Prostate gland (tissue), 2 donors: ENCODE measurements at regions of chr12 and their contacts with region 1.

Region 1: GRCh38 chr12:45183246-45183645 is 32.6 kb upstream of the ANO6 start:
- DNase-seq: no peak
- H3K4me3 ChIP-seq: no peak overlapping the region
- H3K27ac ChIP-seq: no peak overlapping the region
- H3K4me1 ChIP-seq: no peaks in the 10 kb centered on the region
- H3K27me3 ChIP-seq: no peaks in the 10 kb centered on the region
- CTCF ChIP-seq: peak in 2 of 4 experiments; percentile 22 to 23
- POLR2A ChIP-seq: no peak

Region 2: DNA sequence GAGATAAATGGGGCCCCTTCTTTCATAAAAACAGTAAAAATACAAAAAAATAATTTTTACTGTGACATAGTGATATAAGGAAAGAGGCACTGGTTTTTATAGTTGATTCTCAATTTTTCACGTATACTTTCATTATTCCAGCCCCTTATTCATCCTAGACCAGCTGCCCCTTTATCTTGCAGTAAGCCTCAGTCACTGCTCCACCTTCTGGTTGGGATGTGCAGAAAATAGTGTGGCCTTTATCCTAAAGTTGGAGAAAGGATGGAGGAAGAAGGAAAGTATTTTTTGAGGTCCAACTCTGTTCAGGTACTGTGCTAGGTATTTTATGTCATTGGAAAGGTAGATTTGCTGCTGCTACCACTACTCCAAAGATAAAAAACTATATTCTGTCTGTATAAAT is 205.3 kb after region 1 on chr12:
- intact Hi-C with region 1: loop called (anchors 5 kb)
- DNase-seq: peak; percentile 10
- H3K4me3 ChIP-seq: no peak overlapping the region
- H3K27ac ChIP-seq: no peak overlapping the region
- H3K4me1 ChIP-seq: no peaks in the 10 kb centered on the region
- H3K27me3 ChIP-seq: no peaks in the 10 kb centered on the region
- CTCF ChIP-seq: peak; percentile 18 to 62 (median 46)
- POLR2A ChIP-seq: no peak